ENCODE measurements at regions of chr17 and their contacts with region 1.

Region 1: DNA sequence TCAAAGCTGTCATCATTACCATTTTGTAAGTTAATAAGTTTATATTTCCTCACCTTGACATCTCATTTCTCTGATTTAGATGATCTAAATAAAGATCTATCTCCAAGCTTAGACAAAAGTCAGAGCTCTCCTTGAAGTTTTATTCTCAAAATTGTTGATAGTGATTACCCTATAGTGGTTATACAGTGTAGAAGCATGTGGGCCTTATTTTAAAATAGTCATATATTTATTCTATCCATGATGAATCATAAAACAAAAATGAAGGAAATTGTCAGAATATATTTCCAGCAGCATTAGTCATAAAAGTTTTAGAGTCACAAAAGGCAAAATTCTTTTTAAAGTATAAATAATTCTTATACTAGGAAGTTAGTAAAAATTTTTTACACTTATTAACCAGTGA is 49.0 kb downstream of the RHOT1 start:
- DNase-seq: no peak
- H3K4me3 ChIP-seq: no peak overlapping the region
- H3K27ac ChIP-seq: no peak overlapping the region
- H3K27me3 ChIP-seq: no peaks in the 10 kb centered on the region
- CTCF ChIP-seq: no peak

Region 2: DNA sequence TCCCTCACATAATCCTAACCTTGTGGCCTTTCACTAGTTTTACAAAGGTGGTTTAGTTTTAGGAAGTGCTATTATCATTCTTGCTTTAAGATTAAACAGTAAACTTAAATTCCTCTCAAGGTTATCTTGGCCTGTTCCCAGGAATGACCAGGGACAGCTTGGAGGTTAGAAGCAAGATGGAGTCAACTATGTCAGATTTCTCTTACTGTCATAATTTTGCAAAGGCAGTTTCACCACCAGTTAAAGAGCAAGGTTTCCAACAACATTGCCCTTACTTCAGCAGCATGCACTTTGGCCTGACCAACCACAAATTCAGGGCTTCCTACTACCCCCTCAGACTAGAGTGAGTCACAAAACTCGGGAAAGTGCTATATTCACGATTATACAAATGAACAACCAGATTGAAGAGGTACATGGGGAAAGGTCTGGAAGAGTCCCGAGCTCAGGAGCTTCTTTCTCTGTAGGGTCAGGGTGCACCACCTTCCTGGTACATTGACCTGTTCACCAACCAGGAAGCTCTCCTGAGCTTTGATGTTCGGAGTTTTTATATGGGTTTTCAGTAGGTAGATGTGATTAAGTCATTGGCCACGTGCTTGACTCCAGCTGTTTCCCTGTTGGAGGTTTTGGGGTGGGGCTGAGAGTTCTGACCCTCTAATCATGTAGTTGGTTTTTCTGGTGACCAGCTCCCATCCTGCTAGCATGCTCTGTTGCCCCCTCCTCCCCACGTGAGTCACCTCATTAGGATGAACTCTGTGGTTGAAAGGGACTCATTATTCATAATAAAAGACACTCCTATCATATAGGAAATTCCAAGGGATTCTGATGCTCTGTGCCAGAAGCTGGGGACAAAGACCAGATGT is 29.6 kb before region 1 on chr17:
- CTCF ChIA-PET with region 1: interaction called, 3 read pairs
- POLR2A ChIA-PET with region 1: interaction called, 11 read pairs
- DNase-seq: peak; percentile 58
- H3K4me3 ChIP-seq: peak overlapping the region; percentile 18; the same call in 1 of the 2 replicates
- H3K27ac ChIP-seq: peak overlapping the region; percentile 91
- H3K27me3 ChIP-seq: no peaks in the 10 kb centered on the region
- CTCF ChIP-seq: no peak

Region 3: DNA sequence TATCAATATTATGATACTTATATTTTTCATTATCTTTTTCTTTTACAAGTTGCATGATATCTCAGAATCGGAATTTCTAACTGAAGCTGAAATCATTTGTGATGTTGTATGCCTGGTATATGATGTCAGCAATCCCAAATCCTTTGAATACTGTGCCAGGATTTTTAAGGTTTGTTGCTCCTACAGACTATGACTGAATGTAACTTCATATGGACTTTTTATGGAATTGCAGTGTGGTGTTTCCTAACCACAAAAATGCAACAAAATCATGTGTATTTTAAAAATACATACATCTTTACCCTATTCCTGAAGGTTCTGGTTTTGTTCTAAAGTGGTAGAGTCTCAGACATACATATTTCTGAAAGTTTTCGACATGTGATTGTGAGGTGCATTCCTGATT is 15.6 kb after region 1 on chr17:
- CTCF ChIA-PET with region 1: interaction called, 11 read pairs
- POLR2A ChIA-PET with region 1: interaction called, 12 read pairs
- DNase-seq: peak; percentile 48
- H3K4me3 ChIP-seq: no peak overlapping the region
- H3K27ac ChIP-seq: no peak overlapping the region
- H3K27me3 ChIP-seq: no peaks in the 10 kb centered on the region
- CTCF ChIP-seq: no peak

Region 4: DNA sequence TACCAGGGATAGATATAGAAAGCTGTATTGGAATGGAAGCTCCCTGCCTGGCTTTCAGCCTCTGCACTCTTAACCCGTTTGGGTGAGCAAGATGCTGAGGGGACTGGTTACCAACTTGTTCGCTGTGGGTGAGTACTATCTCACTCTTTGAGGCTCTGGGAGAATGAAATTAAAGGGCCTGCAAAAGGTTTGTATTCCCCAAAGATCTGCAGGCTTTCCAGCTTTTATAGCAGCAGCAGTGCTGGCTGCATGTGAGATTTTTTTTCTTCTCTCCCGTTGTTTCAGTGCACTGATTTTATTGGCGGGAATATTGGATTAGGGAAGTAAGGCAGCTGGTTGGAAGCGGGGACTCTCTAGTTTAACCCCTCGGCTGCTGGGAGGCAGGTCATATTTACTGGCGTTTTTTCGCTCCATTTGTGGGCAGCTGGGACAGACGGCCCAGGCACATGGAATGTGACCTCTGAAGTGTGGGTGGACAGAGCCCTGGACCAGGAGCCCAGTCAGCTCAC is 119.8 kb after region 1 on chr17:
- CTCF ChIA-PET with region 1: no interaction called
- POLR2A ChIA-PET with region 1: no interaction called
- DNase-seq: no peak
- H3K4me3 ChIP-seq: no peak overlapping the region
- H3K27ac ChIP-seq: no peak overlapping the region
- H3K27me3 ChIP-seq: peaks cover 32% of the 10 kb centered on the region
- CTCF ChIP-seq: no peak